CD4-positive, alpha-beta T cell (primary cell): ENCODE measurements at regions of chr1 and their contacts with region 1.

Region 1: GRCh38 chr1:37553927-37554808 is at the start of gene SNIP1:
- DNase-seq: peak; percentile 80 to 96 (median 88)
- ATAC-seq: peak; percentile 98
- H3K4me3 ChIP-seq: peak within 1 kb of the TSS; percentile 71
- H3K4me3 Mint-ChIP-seq: peak within 1 kb of the TSS; percentile 99
- H3K27ac ChIP-seq: peak within 1 kb of the TSS; percentile 83
- H3K27ac Mint-ChIP-seq: peak within 1 kb of the TSS; percentile 92
- H3K4me1 ChIP-seq: peaks cover 19% of the 10 kb centered on the region
- H3K4me1 Mint-ChIP-seq: peaks cover 45% of the 10 kb centered on the region
- H3K27me3 ChIP-seq: no peaks in the 10 kb centered on the region
- H3K27me3 Mint-ChIP-seq: peaks cover 4% of the 10 kb centered on the region
- CTCF ChIP-seq: no peak
- total RNA-seq, gene SNIP1: 57.9 to 64.7 TPM

Region 2: GRCh38 chr1:37458528-37458927 is 95.6 kb before region 1 on chr1:
- CTCF ChIA-PET with region 1: no interaction called
- POLR2A ChIA-PET with region 1: interaction called, 3 read pairs
- intact Hi-C with region 1: loop called in 1 of 2 experiments (anchors 5 kb)
- DNase-seq: peak in 2 of 14 experiments; percentile 19 to 36
- ATAC-seq: no peak
- H3K4me3 ChIP-seq: no peak overlapping the region
- H3K4me3 Mint-ChIP-seq: no peak overlapping the region
- H3K27ac ChIP-seq: no peak overlapping the region
- H3K27ac Mint-ChIP-seq: no peak overlapping the region
- H3K4me1 ChIP-seq: peaks cover 9% of the 10 kb centered on the region
- H3K4me1 Mint-ChIP-seq: peaks cover 6% of the 10 kb centered on the region
- H3K27me3 ChIP-seq: no peaks in the 10 kb centered on the region
- H3K27me3 Mint-ChIP-seq: no peaks in the 10 kb centered on the region
- CTCF ChIP-seq: no peak

Region 3: DNA sequence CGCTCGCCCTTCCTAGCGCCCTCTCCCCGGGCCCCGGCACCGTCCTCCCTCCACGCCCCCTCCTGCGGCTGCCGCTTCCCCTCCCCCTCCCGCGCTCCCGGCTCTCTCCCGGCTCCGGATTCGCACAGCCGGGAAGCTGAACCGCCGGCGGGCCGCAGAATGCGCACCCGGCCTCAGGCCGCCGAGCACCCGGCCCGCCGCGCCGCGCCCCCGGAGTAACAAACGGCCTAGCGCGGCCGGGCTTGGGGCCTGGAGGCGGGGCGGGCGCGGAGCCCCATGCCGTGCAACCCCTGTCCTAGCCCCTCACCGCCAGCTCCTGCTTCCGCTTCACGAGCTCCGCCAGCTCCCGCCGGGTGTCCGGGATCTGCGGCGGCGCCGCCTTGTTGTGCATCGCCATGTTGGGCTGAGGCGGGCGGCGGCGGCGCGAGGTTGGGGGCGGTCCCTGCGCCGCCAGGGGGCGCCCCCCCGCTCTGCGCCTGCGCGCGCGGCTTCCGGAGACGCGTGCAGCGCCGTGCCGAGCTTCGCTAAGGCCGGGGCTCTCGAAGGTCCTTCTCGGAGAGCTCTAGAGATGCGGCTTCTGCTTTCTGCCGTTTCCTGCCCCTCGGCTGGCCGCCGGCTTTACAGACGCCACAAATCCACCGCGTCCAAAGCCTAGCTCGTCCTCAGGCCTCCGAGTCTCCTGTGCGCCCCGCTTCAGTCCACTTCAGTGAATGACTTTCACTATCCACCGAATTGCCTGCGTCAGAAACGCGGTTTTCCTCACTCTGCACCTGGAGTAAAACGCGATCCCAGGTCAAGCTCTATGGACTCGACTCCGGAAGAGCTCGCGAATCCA is 39.6 kb before region 1 on chr1 and contains the start of gene MEAF6:
- CTCF ChIA-PET with region 1: interaction called, 13 read pairs
- POLR2A ChIA-PET with region 1: interaction called, 37 read pairs
- intact Hi-C with region 1: loop called (anchors 1 to 2 kb)
- DNase-seq: peak; percentile 72 to 93 (median 80)
- ATAC-seq: peak; percentile 95
- H3K4me3 ChIP-seq: peak within 1 kb of the TSS; percentile 86
- H3K4me3 Mint-ChIP-seq: peak within 1 kb of the TSS; percentile 97
- H3K27ac ChIP-seq: peak within 1 kb of the TSS; percentile 79 to 95
- H3K27ac Mint-ChIP-seq: peak within 1 kb of the TSS; percentile 95
- H3K4me1 ChIP-seq: peaks cover 22% of the 10 kb centered on the region
- H3K4me1 Mint-ChIP-seq: peaks cover 46% of the 10 kb centered on the region
- H3K27me3 ChIP-seq: no peaks in the 10 kb centered on the region
- H3K27me3 Mint-ChIP-seq: no peaks in the 10 kb centered on the region
- CTCF ChIP-seq: peak; percentile 75
- total RNA-seq, gene MEAF6: 39.0 to 41.5 TPM

Region 4: GRCh38 chr1:37564892-37565291 is 10.7 kb after region 1 on chr1:
- CTCF ChIA-PET with region 1: no interaction called
- POLR2A ChIA-PET with region 1: no interaction called
- intact Hi-C with region 1: no loop called
- DNase-seq: no peak
- ATAC-seq: no peak
- H3K4me3 ChIP-seq: no peak overlapping the region
- H3K4me3 Mint-ChIP-seq: no peak overlapping the region
- H3K27ac ChIP-seq: no peak overlapping the region
- H3K27ac Mint-ChIP-seq: no peak overlapping the region
- H3K4me1 ChIP-seq: no peaks in the 10 kb centered on the region
- H3K4me1 Mint-ChIP-seq: no peaks in the 10 kb centered on the region
- H3K27me3 ChIP-seq: no peaks in the 10 kb centered on the region
- H3K27me3 Mint-ChIP-seq: no peaks in the 10 kb centered on the region
- CTCF ChIP-seq: no peak

Region 5: DNA sequence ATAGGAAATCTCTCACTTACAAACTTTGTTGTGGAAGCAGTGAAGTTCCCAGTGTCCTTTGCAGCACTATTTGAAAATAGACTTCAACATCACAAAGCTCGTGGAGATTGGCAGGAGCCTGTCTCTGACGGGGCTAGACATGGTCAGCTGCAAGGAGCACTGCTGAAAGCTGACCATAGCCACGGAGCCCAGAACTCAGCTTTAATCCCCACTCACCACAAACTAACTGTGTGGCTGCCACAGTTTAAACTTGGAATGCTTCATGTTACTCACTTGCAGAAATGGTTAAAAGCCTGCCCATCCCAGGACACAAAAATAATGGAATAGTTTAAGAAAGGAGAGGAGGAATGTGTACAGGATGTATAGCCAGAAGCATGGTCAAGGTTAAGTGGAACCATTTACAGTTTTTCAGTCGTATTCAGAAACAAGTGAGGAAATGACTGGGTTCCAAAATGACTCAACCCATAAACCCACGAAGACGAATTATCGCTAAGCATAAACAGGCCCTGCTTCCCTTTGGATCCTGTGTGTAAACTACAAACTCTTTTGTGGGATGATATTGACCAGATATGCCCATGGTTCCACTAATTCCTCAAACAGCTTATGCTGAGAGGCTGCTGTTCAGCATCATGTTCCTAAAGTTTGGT is 20.8 kb after region 1 on chr1:
- CTCF ChIA-PET with region 1: no interaction called
- POLR2A ChIA-PET with region 1: no interaction called
- intact Hi-C with region 1: no loop called
- DNase-seq: no peak
- ATAC-seq: no peak
- H3K4me3 ChIP-seq: no peak overlapping the region
- H3K4me3 Mint-ChIP-seq: no peak overlapping the region
- H3K27ac ChIP-seq: no peak overlapping the region
- H3K27ac Mint-ChIP-seq: no peak overlapping the region
- H3K4me1 ChIP-seq: no peaks in the 10 kb centered on the region
- H3K4me1 Mint-ChIP-seq: no peaks in the 10 kb centered on the region
- H3K27me3 ChIP-seq: no peaks in the 10 kb centered on the region
- H3K27me3 Mint-ChIP-seq: no peaks in the 10 kb centered on the region
- CTCF ChIP-seq: no peak

Region 6: GRCh38 chr1:37682334-37682987 is 128.3 kb after region 1 on chr1:
- CTCF ChIA-PET with region 1: no interaction called
- POLR2A ChIA-PET with region 1: no interaction called
- intact Hi-C with region 1: loop called in 1 of 2 experiments (anchors 2 kb)
- DNase-seq: peak; percentile 67 to 86 (median 76)
- ATAC-seq: peak; percentile 98
- H3K4me3 ChIP-seq: no peak overlapping the region
- H3K4me3 Mint-ChIP-seq: no peak overlapping the region
- H3K27ac ChIP-seq: no peak overlapping the region
- H3K27ac Mint-ChIP-seq: peak overlapping the region; percentile 58
- H3K4me1 ChIP-seq: peaks cover 3% of the 10 kb centered on the region
- H3K4me1 Mint-ChIP-seq: peaks cover 9% of the 10 kb centered on the region
- H3K27me3 ChIP-seq: no peaks in the 10 kb centered on the region
- H3K27me3 Mint-ChIP-seq: no peaks in the 10 kb centered on the region
- CTCF ChIP-seq: peak; percentile 89

Region 7: GRCh38 chr1:37859507-37860345 is 305.6 kb after region 1 on chr1 and contains the start of gene MTF1:
- CTCF ChIA-PET with region 1: no interaction called
- POLR2A ChIA-PET with region 1: interaction called, 4 read pairs
- intact Hi-C with region 1: loop called in 1 of 2 experiments (anchors 5 kb)
- DNase-seq: peak; percentile 91 to 99 (median 95)
- ATAC-seq: peak; percentile 98
- H3K4me3 ChIP-seq: peak within 1 kb of the TSS; percentile 88
- H3K4me3 Mint-ChIP-seq: peak within 1 kb of the TSS; percentile 98
- H3K27ac ChIP-seq: peak within 1 kb of the TSS; percentile 81 to 91
- H3K27ac Mint-ChIP-seq: peak within 1 kb of the TSS; percentile 87
- H3K4me1 ChIP-seq: peaks cover 18% of the 10 kb centered on the region
- H3K4me1 Mint-ChIP-seq: peaks cover 41% of the 10 kb centered on the region
- H3K27me3 ChIP-seq: no peaks in the 10 kb centered on the region
- H3K27me3 Mint-ChIP-seq: no peaks in the 10 kb centered on the region
- CTCF ChIP-seq: peak; percentile 91
- total RNA-seq, gene MTF1: 28.1 to 31.2 TPM